GM12878 (cell line): ENCODE measurements at regions of chr7 and their contacts with region 1.

Region 1: DNA sequence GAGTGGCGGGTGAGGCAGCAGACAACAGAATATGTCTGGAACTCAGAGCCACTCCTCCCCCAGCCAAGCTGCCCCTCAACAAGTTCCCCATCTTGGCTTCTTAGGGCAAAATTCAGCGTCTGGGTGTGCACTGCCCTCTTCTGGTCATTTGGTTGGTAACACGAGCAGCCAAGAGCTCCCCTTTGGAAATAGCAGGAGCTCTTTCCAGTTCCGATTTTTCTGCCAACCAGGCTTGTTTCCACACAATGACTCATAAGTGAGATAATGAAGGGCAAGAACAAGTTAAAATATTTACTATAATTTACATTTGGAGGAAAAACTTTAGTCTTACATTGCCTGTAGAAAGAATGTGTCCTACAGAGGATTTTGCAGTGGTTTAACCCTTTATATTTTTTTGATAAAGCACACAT is 70.5 kb downstream of the ADCYAP1R1 start:
- DNase-seq: no peak
- ATAC-seq: peak; percentile 89
- H3K4me3 ChIP-seq: no peak overlapping the region
- H3K27ac ChIP-seq: no peak overlapping the region
- H3K4me1 ChIP-seq: no peaks in the 10 kb centered on the region
- H3K27me3 ChIP-seq: no peaks in the 10 kb centered on the region; a peak in 3 of 4 replicates
- CTCF ChIP-seq: peak; percentile 72 to 86 (median 79)
- EP300 ChIP-seq: no peak
- POLR2A ChIP-seq: no peak
- RAD21 ChIP-seq: peak; percentile 84

Region 2: DNA sequence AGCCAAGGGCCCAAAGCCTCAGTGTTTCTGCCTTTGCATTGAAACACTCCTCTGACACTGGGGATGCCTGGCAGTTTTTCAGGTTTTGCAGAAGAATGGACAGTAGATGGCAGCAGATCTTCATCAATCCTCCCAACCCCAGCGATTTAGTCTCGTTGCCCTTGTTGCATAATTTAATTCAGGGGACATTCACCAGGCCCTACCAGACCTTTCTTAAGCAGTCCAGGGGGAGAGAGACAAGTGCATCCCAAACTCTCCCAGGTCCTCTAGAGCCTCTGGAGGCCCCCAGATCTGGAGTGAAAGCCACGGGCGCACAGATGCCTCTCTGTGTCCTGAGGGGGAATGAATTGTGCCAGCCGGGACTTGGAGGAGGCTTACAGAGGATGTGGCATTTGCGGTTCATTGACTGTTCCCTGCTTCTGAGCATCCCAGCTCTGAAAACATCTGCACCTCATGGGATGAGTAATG is 321.8 kb before region 1 on chr7:
- CTCF ChIA-PET with region 1: interaction called, 35 read pairs
- POLR2A ChIA-PET with region 1: interaction called, 3 read pairs
- RAD21 ChIA-PET with region 1: interaction called, 14 read pairs
- SMC1A ChIA-PET with region 1: interaction called, 10 read pairs
- in situ Hi-C with region 1: loop called (anchors 5 kb)
- intact Hi-C with region 1: loop called (anchors 1 kb)
- DNase-seq: peak; percentile 21
- ATAC-seq: peak; percentile 77
- H3K4me3 ChIP-seq: no peak overlapping the region
- H3K27ac ChIP-seq: no peak overlapping the region
- H3K4me1 ChIP-seq: peaks cover 18% of the 10 kb centered on the region
- H3K27me3 ChIP-seq: no peaks in the 10 kb centered on the region
- CTCF ChIP-seq: peak; percentile 60 to 91 (median 73)
- EP300 ChIP-seq: no peak
- POLR2A ChIP-seq: no peak
- RAD21 ChIP-seq: peak; percentile 83

Region 3: GRCh38 chr7:30938435-30939316 is 184.0 kb before region 1 on chr7:
- CTCF ChIA-PET with region 1: interaction called, 18 read pairs
- POLR2A ChIA-PET with region 1: no interaction called
- RAD21 ChIA-PET with region 1: interaction called, 12 read pairs
- SMC1A ChIA-PET with region 1: interaction called, 5 read pairs
- in situ Hi-C with region 1: no loop called
- intact Hi-C with region 1: loop called (anchors 5 kb)
- DNase-seq: peak; percentile 32
- ATAC-seq: peak; percentile 93
- H3K4me3 ChIP-seq: no peak overlapping the region
- H3K27ac ChIP-seq: no peak overlapping the region
- H3K4me1 ChIP-seq: no peaks in the 10 kb centered on the region
- H3K27me3 ChIP-seq: no peaks in the 10 kb centered on the region; a peak in 1 of 4 replicates
- CTCF ChIP-seq: peak; percentile 92 to 99 (median 95); a peak in 5 of 6 replicates
- EP300 ChIP-seq: no peak
- POLR2A ChIP-seq: no peak
- RAD21 ChIP-seq: peak; percentile 46; the same call in 1 of the 2 replicates

Region 4: DNA sequence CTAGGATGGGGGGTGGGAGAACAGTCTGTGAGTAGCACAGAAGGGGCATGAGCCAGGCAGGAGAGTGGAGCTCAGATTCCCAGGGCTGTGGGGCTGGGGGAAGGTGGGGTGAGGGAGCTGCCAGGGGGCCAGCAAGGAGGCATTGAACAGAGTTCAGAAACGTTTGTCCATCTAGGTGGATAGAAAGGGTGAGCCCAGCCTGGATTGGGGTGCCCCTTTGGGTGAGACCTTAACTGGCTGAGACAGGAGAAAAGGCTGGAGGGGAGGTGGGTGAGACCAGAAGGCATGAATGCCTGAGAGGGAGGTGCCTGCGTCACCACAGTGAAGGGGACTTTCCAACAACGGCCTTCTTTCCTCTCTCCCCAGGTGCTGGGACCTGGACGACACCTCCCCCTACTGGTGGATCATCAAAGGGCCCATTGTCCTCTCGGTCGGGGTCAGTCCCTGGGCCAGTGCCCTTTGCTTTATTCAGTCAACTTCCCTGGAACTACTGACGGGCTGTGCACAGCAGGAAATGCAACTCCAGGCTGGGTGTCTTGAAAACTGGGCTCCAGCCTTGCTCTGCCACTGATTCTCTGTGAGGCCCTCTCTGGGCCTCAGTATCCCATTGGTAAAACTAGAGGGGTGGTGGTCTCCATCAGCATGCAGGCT is 147.9 kb before region 1 on chr7:
- CTCF ChIA-PET with region 1: interaction called, 398 read pairs
- POLR2A ChIA-PET with region 1: no interaction called
- RAD21 ChIA-PET with region 1: interaction called, 6 read pairs
- SMC1A ChIA-PET with region 1: interaction called, 146 read pairs
- in situ Hi-C with region 1: no loop called
- intact Hi-C with region 1: no loop called
- DNase-seq: peak; percentile 60
- ATAC-seq: peak; percentile 96
- H3K4me3 ChIP-seq: no peak overlapping the region
- H3K27ac ChIP-seq: peak overlapping the region; percentile 19
- H3K4me1 ChIP-seq: peaks cover 13% of the 10 kb centered on the region
- H3K27me3 ChIP-seq: no peaks in the 10 kb centered on the region; a peak in 1 of 4 replicates
- CTCF ChIP-seq: peak; percentile 90 to 96 (median 93); a peak in 5 of 6 replicates
- EP300 ChIP-seq: peak; percentile 78; a peak in 2 of 4 replicates
- POLR2A ChIP-seq: no peak
- RAD21 ChIP-seq: peak; percentile 82

Region 5: GRCh38 chr7:31134246-31135188 is 11.9 kb after region 1 on chr7:
- CTCF ChIA-PET with region 1: interaction called, 63 read pairs
- POLR2A ChIA-PET with region 1: no interaction called
- RAD21 ChIA-PET with region 1: interaction called, 6 read pairs
- SMC1A ChIA-PET with region 1: interaction called, 25 read pairs
- in situ Hi-C with region 1: no loop called
- intact Hi-C with region 1: no loop called
- DNase-seq: no peak
- ATAC-seq: peak; percentile 97
- H3K4me3 ChIP-seq: no peak overlapping the region
- H3K27ac ChIP-seq: no peak overlapping the region
- H3K4me1 ChIP-seq: no peaks in the 10 kb centered on the region
- H3K27me3 ChIP-seq: no peaks in the 10 kb centered on the region
- CTCF ChIP-seq: peak; percentile 61 to 75 (median 63)
- EP300 ChIP-seq: no peak
- POLR2A ChIP-seq: no peak
- RAD21 ChIP-seq: peak; percentile 80

Region 6: DNA sequence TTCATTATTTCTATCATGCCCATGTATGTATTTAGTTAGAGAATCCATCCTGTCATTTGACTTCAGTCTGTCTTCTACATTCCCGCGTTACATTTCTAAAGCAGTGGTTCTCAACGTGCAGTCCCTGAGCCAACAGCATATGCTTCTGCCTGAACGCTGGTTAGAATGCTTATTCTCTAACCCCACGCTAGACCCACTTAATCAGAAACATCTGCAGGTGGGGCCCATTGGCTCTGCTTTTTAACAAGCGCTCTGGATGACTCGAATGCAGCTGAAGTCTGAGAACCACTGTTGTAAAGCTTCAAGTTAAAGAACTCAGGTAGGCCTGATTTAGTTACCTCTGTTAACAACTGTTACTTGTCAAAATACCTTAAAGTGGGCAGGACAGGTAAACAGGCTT is 179.7 kb after region 1 on chr7:
- CTCF ChIA-PET with region 1: no interaction called
- POLR2A ChIA-PET with region 1: no interaction called
- RAD21 ChIA-PET with region 1: no interaction called
- SMC1A ChIA-PET with region 1: no interaction called
- in situ Hi-C with region 1: no loop called
- intact Hi-C with region 1: no loop called
- DNase-seq: no peak
- ATAC-seq: no peak
- H3K4me3 ChIP-seq: no peak overlapping the region
- H3K27ac ChIP-seq: no peak overlapping the region
- H3K4me1 ChIP-seq: no peaks in the 10 kb centered on the region
- H3K27me3 ChIP-seq: peaks cover 0 to 2% of the 10 kb centered on the region in 2 experiments; a peak in 1 of 4 replicates
- CTCF ChIP-seq: no peak
- EP300 ChIP-seq: no peak
- POLR2A ChIP-seq: no peak
- RAD21 ChIP-seq: no peak

Region 7: DNA sequence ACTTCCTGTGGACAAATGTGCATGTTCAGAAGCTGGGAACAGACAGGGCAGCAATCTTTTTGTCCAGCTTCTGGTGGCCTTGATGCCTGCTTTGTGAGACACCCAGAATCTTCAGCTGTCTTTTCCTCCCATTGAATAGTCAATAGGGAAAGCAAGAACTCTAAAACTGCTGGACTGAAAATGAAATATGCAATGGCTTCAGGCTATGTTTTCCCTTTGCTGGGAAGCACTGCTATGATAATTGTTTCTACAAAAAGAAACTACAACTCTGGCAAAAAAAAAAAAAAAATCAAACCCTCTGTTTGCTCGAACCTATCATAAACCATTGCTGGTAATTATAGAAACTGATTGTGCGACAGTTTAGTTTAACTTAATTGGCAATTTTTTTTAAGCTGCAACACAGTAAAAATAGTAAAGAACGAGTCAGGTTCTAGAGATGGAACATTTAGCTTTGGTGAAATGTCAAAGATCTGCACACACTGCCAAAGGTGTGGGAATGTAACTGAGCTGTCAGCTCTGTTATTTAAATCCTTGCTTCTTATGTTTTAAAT is 296.9 kb after region 1 on chr7:
- CTCF ChIA-PET with region 1: no interaction called
- POLR2A ChIA-PET with region 1: no interaction called
- RAD21 ChIA-PET with region 1: no interaction called
- SMC1A ChIA-PET with region 1: no interaction called
- in situ Hi-C with region 1: no loop called
- intact Hi-C with region 1: no loop called
- DNase-seq: no peak
- ATAC-seq: no peak
- H3K4me3 ChIP-seq: no peak overlapping the region
- H3K27ac ChIP-seq: no peak overlapping the region
- H3K4me1 ChIP-seq: no peaks in the 10 kb centered on the region
- H3K27me3 ChIP-seq: no peaks in the 10 kb centered on the region
- CTCF ChIP-seq: no peak
- EP300 ChIP-seq: no peak
- POLR2A ChIP-seq: no peak
- RAD21 ChIP-seq: no peak